ENCODE measurements at regions of chr2 and their contacts with region 1.

Region 1: DNA sequence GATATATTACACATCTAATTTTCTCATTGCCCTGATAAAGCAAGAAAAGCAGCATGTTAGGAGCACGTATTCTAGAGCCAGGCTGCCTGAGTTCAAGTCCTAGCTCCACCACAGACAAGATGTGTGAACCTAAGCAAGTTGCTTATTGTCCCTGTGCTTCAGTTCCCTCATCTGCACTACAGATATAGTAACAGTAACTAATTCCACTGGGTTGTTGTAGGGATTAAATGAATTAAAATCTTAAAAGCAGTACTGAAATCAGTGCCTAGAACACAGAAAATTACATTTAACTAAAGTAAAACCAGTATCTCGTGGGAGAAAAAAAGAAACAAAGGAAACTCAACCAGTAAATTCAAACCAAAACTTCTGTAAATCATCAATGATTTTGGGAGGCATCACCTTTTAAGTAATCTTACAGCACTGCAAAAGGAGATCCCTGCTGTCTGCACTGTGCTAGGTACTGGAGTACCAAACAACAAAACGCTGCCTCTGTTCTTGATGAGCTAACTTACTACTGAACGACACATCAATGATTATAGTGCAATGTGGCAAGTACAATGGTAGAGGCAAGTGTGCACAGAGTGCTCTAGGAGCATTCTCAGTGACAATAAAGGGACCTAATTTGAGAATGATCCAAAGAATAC is 7.9 kb downstream of the MAP3K2 start:
- DNase-seq: no peak
- H3K4me3 ChIP-seq: no peak overlapping the region
- CTCF ChIP-seq: no peak

Region 2: GRCh38 chr2:127342101-127342500 is 37.7 kb before region 1 on chr2:
- in situ Hi-C with region 1: loop called (anchors 5 kb)
- DNase-seq: no peak
- H3K4me3 ChIP-seq: no peak overlapping the region
- CTCF ChIP-seq: no peak